OCI-LY7 (cell line): ENCODE measurements at regions of chr7 and their contacts with region 1.

Region 1: DNA sequence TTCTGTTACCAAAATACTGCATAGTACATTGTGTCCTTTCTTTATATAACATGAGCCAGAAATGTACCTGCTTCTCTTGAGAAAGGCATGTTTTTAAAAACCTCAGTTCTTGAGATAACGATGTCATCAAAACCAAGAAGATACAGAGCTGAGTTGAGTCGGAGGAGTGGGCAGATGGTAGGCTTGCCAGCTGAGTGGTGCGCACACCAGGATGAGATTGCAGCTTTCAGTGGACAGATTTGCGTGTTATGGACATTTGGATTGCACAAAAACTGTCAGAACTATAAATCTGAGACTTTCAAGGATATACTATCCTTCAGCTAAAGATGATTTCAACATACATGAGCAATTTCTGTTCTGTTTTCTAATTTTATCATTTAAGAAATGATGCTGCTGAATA is 25.0 kb downstream of the PRKAR2B start:
- DNase-seq: no peak
- H3K4me3 ChIP-seq: peak overlapping the region; percentile 60
- H3K27ac ChIP-seq: peak overlapping the region; percentile 67
- H3K4me1 ChIP-seq: peaks cover 60% of the 10 kb centered on the region
- CTCF ChIP-seq: no peak

Region 2: GRCh38 chr7:107056728-107057473 is 12.6 kb before region 1 on chr7:
- CTCF ChIA-PET with region 1: no interaction called
- POLR2A ChIA-PET with region 1: interaction called, 10 read pairs
- intact Hi-C with region 1: no loop called
- DNase-seq: no peak
- H3K4me3 ChIP-seq: peak overlapping the region; percentile 36
- H3K27ac ChIP-seq: peak overlapping the region; percentile 33
- H3K4me1 ChIP-seq: peaks cover 50% of the 10 kb centered on the region
- CTCF ChIP-seq: no peak